Activated B cell treated with CpG ODN at 0.5 μM for 24 hours (primary cell): ENCODE measurements at regions of chr11 and their contacts with region 1.

Region 1: DNA sequence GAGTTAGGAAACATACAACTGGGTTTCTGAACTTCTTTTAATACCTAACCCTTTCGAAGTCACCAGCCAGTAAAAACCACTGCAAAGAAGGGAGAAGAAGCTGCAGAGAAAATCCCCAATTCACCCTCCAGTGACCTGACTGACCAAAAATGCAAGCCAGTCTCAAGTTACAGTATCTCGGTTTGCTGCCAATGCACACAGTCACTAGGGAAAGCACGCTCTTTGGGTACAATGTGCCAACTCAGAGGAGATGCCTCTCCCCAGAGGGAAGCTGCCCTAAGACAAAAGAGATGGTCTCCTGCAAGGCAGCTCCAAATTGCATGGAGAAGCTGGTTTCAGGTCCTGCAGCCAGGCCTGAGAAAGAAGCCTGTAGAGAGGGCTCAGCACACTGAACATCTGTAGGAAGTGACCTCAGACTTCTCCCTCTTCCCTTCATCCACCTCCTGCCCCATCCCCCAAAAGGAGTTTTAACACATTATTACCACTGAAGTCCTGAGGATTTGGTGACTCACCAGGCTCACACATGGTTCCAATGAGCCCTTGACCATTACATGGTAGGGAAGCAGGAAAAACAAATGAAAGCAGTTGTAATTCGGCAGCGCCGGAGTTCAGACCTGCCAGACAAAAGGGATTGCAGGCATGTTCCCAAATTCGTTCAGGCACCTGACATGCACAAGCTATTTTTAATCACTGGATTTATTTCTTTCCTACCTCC is 90.1 kb downstream of the ETS1 start:
- DNase-seq: peak; percentile 43
- ATAC-seq: peak; percentile 92
- H3K4me3 Mint-ChIP-seq: peak overlapping the region; percentile 78
- H3K27ac Mint-ChIP-seq: peak overlapping the region; percentile 93
- H3K4me1 Mint-ChIP-seq: peaks cover 98% of the 10 kb centered on the region
- H3K27me3 Mint-ChIP-seq: no peaks in the 10 kb centered on the region
- CTCF ChIP-seq: no peak

Region 2: GRCh38 chr11:128482512-128483191 is 14.6 kb before region 1 on chr11:
- CTCF ChIA-PET with region 1: interaction called, 3 read pairs
- POLR2A ChIA-PET with region 1: interaction called, 46 read pairs
- intact Hi-C with region 1: loop called (anchors 1 kb)
- DNase-seq: no peak
- ATAC-seq: peak; percentile 18
- H3K4me3 Mint-ChIP-seq: peak overlapping the region; percentile 67
- H3K27ac Mint-ChIP-seq: peak overlapping the region; percentile 89
- H3K4me1 Mint-ChIP-seq: peaks cover 95% of the 10 kb centered on the region
- H3K27me3 Mint-ChIP-seq: no peaks in the 10 kb centered on the region
- CTCF ChIP-seq: no peak

Region 3: GRCh38 chr11:128669506-128670270 is 172.5 kb after region 1 on chr11:
- CTCF ChIA-PET with region 1: no interaction called
- POLR2A ChIA-PET with region 1: no interaction called
- intact Hi-C with region 1: no loop called
- DNase-seq: no peak
- ATAC-seq: no peak
- H3K4me3 Mint-ChIP-seq: no peak overlapping the region
- H3K27ac Mint-ChIP-seq: no peak overlapping the region
- H3K4me1 Mint-ChIP-seq: peaks cover 7% of the 10 kb centered on the region
- H3K27me3 Mint-ChIP-seq: peaks cover 5% of the 10 kb centered on the region
- CTCF ChIP-seq: no peak